Heart left ventricle (tissue), 16 donors: ENCODE measurements at regions of chr4 and their contacts with region 1.

Region 1: GRCh38 chr4:48269861-48270522 is 354 bp upstream of the TEC start:
- DNase-seq: peak; percentile 92 to 96 (median 94)
- ATAC-seq: peak; percentile 98 to 99 (median 98)
- H3K4me3 ChIP-seq: peak overlapping the region; percentile 69 to 92 (median 84)
- H3K27ac ChIP-seq: peak overlapping the region in 11 of 12 donors; percentile 73 to 91 (median 83)
- H3K4me1 ChIP-seq: peaks cover 0 to 37% (median under 1%) of the 10 kb centered on the region in 12 donors
- H3K27me3 ChIP-seq: no peaks in the 10 kb centered on the region
- CTCF ChIP-seq: peak in 9 of 12 donors; percentile 6 to 49 (median 32)
- POLR2A ChIP-seq: peak in 1 of 2 donors; percentile 22

Region 2: GRCh38 chr4:48141048-48141447 is 128.9 kb before region 1 on chr4:
- intact Hi-C with region 1: loop called in 2 of 10 experiments (anchors 10 kb)
- DNase-seq: no peak
- ATAC-seq: peak in 1 of 4 donors; percentile 56
- H3K4me3 ChIP-seq: no peak overlapping the region
- H3K27ac ChIP-seq: no peak overlapping the region
- H3K4me1 ChIP-seq: peaks cover 0 to 5% (median 0%) of the 10 kb centered on the region in 12 donors
- H3K27me3 ChIP-seq: no peaks in the 10 kb centered on the region
- CTCF ChIP-seq: peak; percentile 39 to 67 (median 51)
- POLR2A ChIP-seq: no peak

Region 3: DNA sequence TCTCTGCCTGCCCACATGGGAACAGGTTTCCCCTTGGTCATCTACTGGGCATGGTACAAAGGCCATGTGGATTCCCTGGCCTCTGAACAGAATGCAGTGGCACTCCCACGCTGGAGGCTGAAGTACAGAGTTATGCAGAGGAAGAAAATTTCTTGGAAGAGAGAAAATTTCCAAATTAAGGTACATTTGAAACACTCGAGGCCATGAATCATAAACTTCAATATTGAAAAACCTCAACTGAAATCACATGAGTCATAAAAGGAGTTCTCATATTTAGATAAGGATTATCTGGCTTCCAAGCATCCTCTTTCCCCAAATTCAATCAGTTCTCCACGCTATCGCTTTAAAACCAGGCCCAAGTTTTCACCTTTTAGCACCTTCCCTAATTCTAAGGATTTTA is 107.8 kb before region 1 on chr4:
- intact Hi-C with region 1: loop called in 1 of 10 experiments (anchors 10 kb)
- DNase-seq: no peak
- ATAC-seq: no peak
- H3K4me3 ChIP-seq: no peak overlapping the region
- H3K27ac ChIP-seq: no peak overlapping the region
- H3K4me1 ChIP-seq: peaks cover 0 to 3% (median 0%) of the 10 kb centered on the region in 12 donors
- H3K27me3 ChIP-seq: no peaks in the 10 kb centered on the region
- CTCF ChIP-seq: no peak
- POLR2A ChIP-seq: no peak

Region 4: DNA sequence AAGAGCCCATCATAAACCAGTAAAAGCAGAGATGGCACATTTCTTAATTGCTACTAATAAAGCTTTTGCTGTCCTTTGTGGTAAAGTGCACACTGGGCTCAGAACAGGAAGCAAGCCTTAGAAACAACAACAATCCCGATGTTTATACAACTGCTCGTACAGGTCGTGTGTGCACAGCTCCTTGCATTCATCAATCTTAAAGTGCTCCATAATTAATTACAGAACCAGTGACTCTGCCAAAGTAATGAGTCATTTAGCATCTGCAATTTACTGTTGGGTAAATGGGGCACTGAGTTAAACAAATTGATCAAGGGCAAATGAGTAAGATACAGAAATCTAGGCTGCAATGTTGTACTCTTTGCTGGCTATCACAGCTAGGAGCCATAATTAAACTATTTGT is 74.6 kb before region 1 on chr4:
- intact Hi-C with region 1: no loop called
- DNase-seq: no peak
- ATAC-seq: no peak
- H3K4me3 ChIP-seq: no peak overlapping the region
- H3K27ac ChIP-seq: no peak overlapping the region
- H3K4me1 ChIP-seq: peaks cover 0 to 17% (median 0%) of the 10 kb centered on the region in 12 donors
- H3K27me3 ChIP-seq: no peaks in the 10 kb centered on the region
- CTCF ChIP-seq: no peak
- POLR2A ChIP-seq: no peak

Region 5: DNA sequence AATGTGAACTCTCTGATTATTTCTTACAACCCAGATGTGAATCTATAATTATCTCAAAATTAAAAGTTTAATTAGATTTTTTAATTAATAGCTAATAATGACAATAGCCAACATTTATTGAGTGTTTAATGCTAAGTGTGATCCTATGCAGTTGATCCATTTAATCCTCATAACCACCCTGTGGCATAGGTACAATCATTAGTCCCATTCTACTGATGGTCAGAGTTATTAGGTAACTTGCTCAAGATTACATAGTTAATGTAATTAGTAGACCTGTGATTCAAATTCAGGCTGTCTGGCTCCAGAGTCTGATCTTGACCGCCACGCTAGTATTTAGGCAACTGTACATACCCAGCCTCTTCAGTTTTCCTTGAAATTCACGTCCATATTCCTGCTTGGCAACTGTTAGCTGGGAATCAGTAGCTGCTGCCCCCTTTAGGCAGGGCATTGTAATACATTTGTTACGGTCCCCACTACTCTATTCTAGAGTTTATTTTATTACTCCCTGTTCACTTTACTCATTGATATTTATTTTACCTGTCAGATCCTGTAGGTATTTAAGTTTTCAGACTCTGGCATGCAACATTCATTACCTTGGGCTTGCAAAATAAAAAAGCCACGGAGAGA is 20.3 kb after region 1 on chr4:
- intact Hi-C with region 1: no loop called
- DNase-seq: no peak
- ATAC-seq: no peak
- H3K4me3 ChIP-seq: no peak overlapping the region
- H3K27ac ChIP-seq: no peak overlapping the region
- H3K4me1 ChIP-seq: no peaks in the 10 kb centered on the region
- H3K27me3 ChIP-seq: no peaks in the 10 kb centered on the region
- CTCF ChIP-seq: peak; percentile 28 to 59 (median 40)
- POLR2A ChIP-seq: no peak

Region 6: DNA sequence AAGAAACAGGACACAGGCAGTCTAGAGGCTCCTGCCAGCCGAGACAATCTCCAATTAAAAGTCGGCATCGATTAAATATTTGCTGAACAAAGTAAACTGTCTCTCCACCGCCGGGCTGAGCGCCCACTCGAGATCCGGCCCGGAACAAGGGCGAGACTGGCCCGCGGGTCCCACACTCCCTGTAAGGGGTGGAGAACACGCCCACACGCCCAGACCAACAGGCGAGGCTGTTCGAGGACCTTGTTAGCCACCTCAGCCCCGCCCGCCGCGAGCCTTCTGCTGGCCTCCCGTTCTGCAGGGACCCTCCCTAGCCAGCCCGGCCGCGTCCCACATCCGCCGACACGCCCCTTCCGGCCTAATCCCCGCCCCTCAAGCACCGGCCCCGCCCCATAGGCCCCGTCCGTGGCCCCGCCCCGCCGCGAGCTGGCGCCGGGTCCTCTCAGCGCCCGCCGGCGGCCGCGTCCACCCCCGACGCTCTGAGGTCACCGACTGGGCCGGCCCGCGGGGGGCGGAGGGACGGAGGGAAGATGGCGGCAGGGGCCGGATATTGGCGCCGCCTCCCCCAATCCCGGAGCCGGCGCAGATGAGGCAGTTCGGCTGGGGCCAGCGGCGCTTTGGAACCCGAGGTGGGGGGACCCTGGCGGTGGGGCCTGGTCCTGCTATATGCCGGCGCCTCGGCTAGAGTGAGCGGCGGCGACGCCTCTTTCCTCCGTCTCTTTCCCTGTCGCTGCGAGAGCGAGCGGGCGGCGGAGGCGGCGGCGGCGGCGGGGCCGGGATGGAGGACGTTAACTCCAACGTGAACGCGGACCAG is 71.2 kb after region 1 on chr4 and contains the start of gene SLAIN2:
- intact Hi-C with region 1: loop called in 1 of 10 experiments (anchors 5 kb)
- DNase-seq: peak; percentile 99 to 100 (median 100)
- ATAC-seq: peak; percentile 95 to 98 (median 98)
- H3K4me3 ChIP-seq: peak within 1 kb of the TSS; percentile 77 to 97 (median 93)
- H3K27ac ChIP-seq: peak within 1 kb of the TSS; percentile 95 to 99 (median 98)
- H3K4me1 ChIP-seq: peaks cover 3 to 56% (median 35%) of the 10 kb centered on the region in 12 donors
- H3K27me3 ChIP-seq: no peaks in the 10 kb centered on the region
- CTCF ChIP-seq: peak in 10 of 12 donors; percentile 11 to 49 (median 36)
- POLR2A ChIP-seq: peak in 1 of 2 donors; percentile 79
- total RNA-seq, gene SLAIN2: 106 to 178 (median 138) TPM

Region 7: GRCh38 chr4:48623182-48623780 is 353.3 kb after region 1 on chr4:
- intact Hi-C with region 1: no loop called
- DNase-seq: no peak
- ATAC-seq: no peak
- H3K4me3 ChIP-seq: no peak overlapping the region
- H3K27ac ChIP-seq: no peak overlapping the region
- H3K4me1 ChIP-seq: peaks cover 0 to 34% (median 11%) of the 10 kb centered on the region in 12 donors
- H3K27me3 ChIP-seq: no peaks in the 10 kb centered on the region
- CTCF ChIP-seq: no peak
- POLR2A ChIP-seq: no peak